Calu3 (cell line): ENCODE measurements at regions of chr1 and their contacts with region 1.

Region 1: DNA sequence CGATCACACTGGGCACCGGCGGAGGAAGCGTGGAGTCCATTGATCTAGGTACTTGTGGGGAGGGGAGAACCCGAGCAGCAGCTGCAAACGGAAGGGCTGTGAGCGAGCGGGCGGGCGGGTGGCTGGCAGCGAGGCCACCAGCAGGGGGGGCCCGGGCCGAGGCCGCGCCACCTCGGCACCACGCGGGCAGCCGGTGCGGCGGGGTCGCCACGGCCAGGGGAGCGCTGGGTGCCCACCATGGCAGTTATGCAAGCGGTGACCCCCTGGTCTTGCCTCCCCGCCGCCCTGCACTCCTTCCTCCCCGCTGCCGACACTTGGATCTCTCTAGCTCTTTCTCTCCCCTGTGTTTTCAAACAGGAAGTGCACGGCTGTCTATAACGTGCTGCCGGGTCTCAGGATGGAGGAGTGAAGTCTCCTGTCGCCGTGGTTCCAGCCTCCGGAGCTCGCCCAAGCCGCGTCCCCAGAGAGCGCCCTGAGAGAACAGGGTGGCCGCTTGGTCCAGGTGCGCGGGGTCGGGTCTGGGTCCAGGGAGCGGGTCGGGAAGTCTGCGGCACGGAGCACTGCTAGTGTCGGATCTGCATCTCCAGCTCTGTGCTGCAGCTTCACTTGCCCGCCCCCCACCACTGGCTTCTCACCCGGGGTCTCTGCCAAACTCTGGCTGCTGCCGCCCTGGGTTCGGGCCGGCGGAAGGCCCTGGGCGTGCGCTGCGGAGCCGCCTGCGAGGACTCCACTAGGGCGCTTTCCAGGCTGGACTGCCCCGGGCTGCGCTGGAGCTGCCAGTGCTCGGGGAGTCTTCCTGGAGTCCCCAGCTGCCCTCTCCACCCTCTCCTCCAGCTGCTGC is 22.7 kb downstream of the LRRC8D start:
- DNase-seq: peak; percentile 82
- H3K4me3 Mint-ChIP-seq: peak overlapping the region; percentile 93
- H3K27ac Mint-ChIP-seq: peak overlapping the region; percentile 84
- H3K4me1 Mint-ChIP-seq: peaks cover 8% of the 10 kb centered on the region
- H3K27me3 Mint-ChIP-seq: no peaks in the 10 kb centered on the region
- CTCF ChIP-seq: peak; percentile 88

Region 2: GRCh38 chr1:89578151-89578550 is 265.4 kb before region 1 on chr1:
- CTCF ChIA-PET with region 1: no interaction called
- intact Hi-C with region 1: no loop called
- DNase-seq: no peak
- H3K4me3 Mint-ChIP-seq: no peak overlapping the region
- H3K27ac Mint-ChIP-seq: no peak overlapping the region
- H3K4me1 Mint-ChIP-seq: no peaks in the 10 kb centered on the region
- H3K27me3 Mint-ChIP-seq: no peaks in the 10 kb centered on the region
- CTCF ChIP-seq: no peak

Region 3: GRCh38 chr1:89762779-89763648 is 80.5 kb before region 1 on chr1:
- CTCF ChIA-PET with region 1: no interaction called
- intact Hi-C with region 1: no loop called
- DNase-seq: peak; percentile 85
- H3K4me3 Mint-ChIP-seq: peak overlapping the region; percentile 82
- H3K27ac Mint-ChIP-seq: peak overlapping the region; percentile 27
- H3K4me1 Mint-ChIP-seq: peaks cover 30% of the 10 kb centered on the region
- H3K27me3 Mint-ChIP-seq: peaks cover 46% of the 10 kb centered on the region
- CTCF ChIP-seq: peak; percentile 95

Region 4: DNA sequence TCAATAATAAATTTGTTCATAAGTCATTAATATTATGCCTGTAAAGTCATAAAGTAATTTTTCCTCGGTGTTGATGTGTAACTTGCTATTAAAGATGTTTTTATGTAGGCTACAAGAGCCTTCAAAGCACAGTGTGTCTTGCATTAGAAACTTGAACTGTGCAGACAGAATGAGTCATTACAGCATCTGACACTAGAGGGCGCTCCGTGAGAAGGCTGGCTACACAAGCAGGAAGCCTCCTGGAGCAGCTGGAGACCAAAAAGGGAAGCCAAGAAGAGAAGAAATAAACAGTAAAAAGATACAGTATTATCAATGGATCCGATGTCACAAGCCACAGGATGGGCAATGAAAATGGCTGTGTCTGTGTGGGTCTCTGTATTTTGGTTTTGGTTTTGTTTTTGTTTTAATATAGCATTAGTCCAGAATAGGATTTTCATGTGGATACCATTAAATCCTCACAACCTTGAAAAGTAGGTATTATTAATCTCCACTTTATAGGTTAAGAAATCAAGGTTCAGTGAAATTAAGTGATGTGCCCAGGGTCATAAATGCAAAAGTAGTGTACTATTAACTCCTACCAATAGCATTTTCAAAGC is 38.8 kb before region 1 on chr1:
- CTCF ChIA-PET with region 1: interaction called, 5 read pairs
- intact Hi-C with region 1: loop called (anchors 2 kb)
- DNase-seq: peak; percentile 90
- H3K4me3 Mint-ChIP-seq: no peak overlapping the region
- H3K27ac Mint-ChIP-seq: no peak overlapping the region
- H3K4me1 Mint-ChIP-seq: peaks cover 6% of the 10 kb centered on the region
- H3K27me3 Mint-ChIP-seq: peaks cover 10% of the 10 kb centered on the region
- CTCF ChIP-seq: peak; percentile 80